ENCODE measurements at regions of chr17 and their contacts with region 1.

Region 1: DNA sequence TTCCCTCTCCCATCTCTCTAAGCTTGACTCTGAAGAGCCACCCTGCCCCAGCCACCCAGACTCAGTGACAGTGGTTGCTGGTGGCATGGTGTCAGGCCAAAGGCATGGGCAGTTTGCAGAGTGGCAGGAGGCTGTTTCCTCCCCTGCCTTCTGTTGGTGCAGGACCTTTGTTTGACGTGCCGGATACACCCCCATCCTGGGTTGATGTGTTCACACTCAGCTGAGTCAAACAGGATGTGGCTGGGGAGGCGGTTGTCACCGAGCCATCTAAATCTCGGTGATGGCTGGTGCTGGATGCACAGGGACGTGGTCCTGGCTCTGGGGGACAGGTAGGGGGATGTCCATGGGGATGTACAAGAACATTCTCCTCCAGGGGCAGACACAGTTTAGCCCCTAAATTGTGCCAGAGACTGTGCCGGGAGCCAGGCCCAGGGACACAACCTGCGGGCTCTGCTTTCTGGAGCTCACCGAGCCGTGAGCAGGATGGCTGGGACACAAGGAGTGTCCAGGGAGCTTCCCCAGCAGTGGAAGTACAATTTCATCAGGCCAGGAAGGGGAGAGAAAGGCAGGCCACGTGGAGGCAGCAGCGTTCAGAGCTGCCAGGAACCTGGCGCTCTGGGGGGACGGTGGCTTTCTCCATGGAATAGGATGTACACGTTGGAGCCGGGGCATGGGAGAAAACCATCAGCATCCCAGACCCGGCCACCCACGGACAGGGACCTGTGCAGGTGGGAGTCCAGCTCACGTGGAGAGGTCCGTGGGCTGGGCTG is 264.2 kb downstream of the SEC14L1 start:
- DNase-seq: peak; percentile 74 to 93 (median 92)
- H3K4me3 ChIP-seq: peak overlapping the region in 5 of 7 experiments; percentile 1 to 55 (median 43)
- H3K27ac ChIP-seq: peak overlapping the region in 1 of 2 experiments; percentile 19
- H3K4me1 ChIP-seq: peaks cover 0 to 100% (median 66%) of the 10 kb centered on the region in 4 experiments
- H3K27me3 ChIP-seq: no peaks in the 10 kb centered on the region

Region 2: DNA sequence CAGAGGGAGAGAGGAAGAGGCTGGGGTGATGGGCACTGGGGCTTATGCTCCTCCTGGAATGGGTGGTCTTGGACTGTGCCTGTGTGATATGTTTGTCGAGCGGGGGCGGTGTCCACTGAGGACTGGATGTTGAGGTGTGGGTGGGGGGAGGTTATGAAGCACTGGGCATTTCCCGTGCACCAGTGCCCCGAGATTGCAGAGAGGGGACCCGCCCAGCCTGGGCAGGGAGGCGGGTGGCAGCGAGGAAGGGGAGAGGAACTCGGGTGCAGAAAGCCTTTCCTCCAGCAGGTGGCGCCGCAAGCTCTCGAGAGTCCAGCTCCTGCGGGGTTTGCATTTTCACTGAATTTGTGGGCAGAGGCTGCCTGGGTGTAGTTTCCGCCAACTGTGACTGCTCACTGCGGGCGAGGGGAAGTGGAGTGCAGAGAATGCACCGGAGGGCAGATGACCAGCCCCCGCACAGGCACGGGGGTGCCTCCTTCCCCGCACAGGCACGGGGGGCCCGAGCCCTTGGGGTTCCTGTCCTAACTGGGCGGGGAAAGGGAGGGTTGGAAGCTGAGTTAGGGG is 73.6 kb before region 1 on chr17:
- CTCF ChIA-PET with region 1: interaction called, 34 read pairs
- POLR2A ChIA-PET with region 1: no interaction called
- DNase-seq: peak; percentile 88 to 95 (median 94)
- H3K4me3 ChIP-seq: peak overlapping the region in 5 of 7 experiments; percentile 27 to 69 (median 54)
- H3K27ac ChIP-seq: no peak overlapping the region
- H3K4me1 ChIP-seq: peaks cover 3 to 57% (median 23%) of the 10 kb centered on the region in 4 experiments
- H3K27me3 ChIP-seq: no peaks in the 10 kb centered on the region

Region 3: DNA sequence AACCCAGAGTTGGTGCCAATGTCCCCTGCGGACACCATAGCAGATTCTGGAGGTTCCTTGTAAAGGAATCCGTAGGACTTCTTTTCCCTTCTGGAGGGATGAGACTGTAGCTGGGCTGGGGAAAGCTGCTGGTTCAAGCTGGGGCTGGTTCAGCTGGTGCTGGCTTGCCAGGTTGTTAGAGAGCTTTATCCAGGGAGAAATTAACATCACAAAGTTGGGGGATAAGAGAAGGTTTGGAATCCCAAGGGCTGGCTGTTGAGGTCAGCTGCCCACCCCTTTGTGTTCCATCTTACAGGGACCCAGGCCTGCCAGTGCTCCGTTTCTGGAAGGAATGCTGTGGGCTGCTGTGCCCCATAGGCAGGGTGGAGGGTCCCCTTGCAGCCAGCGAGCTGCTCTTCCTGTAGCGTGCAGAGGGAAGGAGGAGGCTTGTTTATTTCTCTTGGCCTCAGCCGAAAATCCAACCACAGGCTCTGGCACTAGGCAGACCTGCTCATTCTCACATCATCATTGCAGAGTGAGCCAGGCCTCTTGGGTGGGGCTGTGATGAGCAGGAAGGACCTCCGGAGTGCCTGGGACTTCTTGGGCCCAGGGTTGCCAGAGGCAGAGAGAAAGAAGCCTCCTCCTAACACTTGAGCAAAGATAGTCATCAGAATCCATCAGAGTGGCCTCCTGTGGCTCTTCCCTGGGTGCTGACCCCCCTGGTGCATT is 13.2 kb before region 1 on chr17:
- CTCF ChIA-PET with region 1: interaction called, 311 read pairs
- POLR2A ChIA-PET with region 1: interaction called, 13 read pairs
- DNase-seq: peak in 2 of 3 donors; percentile 61 to 64
- H3K4me3 ChIP-seq: peak overlapping the region in 4 of 7 experiments; percentile 19 to 49 (median 32)
- H3K27ac ChIP-seq: no peak overlapping the region
- H3K4me1 ChIP-seq: peaks cover 7 to 84% (median 77%) of the 10 kb centered on the region in 4 experiments
- H3K27me3 ChIP-seq: no peaks in the 10 kb centered on the region

Region 4: DNA sequence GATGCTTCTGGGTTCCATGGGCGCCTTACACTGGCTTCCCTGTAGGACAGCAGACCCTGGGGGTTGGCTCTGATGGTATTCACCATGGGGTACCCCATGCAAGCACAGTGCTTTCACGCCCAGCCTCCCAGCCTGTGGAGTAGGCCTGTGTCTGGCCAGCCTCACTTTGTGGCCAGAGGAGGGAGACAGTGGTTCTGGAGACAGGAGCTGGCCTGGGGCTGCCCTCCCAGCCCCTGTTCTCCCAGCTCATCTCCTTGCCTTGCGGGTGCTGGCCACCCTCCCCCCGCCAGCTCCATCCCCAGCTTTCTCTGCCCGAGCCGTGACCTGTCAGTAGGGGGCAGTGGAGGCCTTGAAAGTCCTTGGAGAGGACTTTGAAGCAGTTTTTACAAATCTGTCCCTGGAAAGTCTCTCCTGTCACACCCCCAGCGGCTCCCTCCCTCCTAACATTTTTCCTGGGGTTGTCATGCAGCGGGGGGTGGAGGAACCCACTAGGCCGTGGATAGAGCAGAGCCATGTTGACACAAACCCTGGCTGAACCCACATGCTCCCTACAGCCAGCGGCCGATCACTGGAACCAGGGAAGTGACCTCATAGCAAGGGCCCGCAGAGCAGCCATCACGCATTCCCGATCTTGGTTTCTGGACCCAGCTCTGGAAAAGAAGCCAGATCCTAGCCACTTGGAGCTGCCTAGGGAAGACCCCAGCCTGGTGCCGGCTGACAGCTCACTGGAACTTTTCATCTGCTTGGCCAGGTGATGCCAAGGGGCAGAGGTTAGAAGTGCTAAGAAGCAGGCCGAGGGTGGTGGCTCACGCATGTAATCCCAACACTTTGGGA is 25.1 kb after region 1 on chr17:
- CTCF ChIA-PET with region 1: interaction called, 311 read pairs
- POLR2A ChIA-PET with region 1: interaction called, 5 read pairs
- DNase-seq: peak; percentile 65 to 73 (median 68)
- H3K4me3 ChIP-seq: peak overlapping the region in 1 of 7 experiments; percentile 6
- H3K27ac ChIP-seq: no peak overlapping the region
- H3K4me1 ChIP-seq: peaks cover 4 to 99% (median 77%) of the 10 kb centered on the region in 4 experiments
- H3K27me3 ChIP-seq: no peaks in the 10 kb centered on the region

Region 5: GRCh38 chr17:77494664-77495435 is 89.9 kb after region 1 on chr17:
- CTCF ChIA-PET with region 1: interaction called, 48 read pairs
- POLR2A ChIA-PET with region 1: no interaction called
- DNase-seq: peak; percentile 56 to 73 (median 60)
- H3K4me3 ChIP-seq: no peak overlapping the region
- H3K27ac ChIP-seq: no peak overlapping the region
- H3K4me1 ChIP-seq: peaks cover 0 to 10% (median under 1%) of the 10 kb centered on the region in 4 experiments
- H3K27me3 ChIP-seq: no peaks in the 10 kb centered on the region

Region 6: DNA sequence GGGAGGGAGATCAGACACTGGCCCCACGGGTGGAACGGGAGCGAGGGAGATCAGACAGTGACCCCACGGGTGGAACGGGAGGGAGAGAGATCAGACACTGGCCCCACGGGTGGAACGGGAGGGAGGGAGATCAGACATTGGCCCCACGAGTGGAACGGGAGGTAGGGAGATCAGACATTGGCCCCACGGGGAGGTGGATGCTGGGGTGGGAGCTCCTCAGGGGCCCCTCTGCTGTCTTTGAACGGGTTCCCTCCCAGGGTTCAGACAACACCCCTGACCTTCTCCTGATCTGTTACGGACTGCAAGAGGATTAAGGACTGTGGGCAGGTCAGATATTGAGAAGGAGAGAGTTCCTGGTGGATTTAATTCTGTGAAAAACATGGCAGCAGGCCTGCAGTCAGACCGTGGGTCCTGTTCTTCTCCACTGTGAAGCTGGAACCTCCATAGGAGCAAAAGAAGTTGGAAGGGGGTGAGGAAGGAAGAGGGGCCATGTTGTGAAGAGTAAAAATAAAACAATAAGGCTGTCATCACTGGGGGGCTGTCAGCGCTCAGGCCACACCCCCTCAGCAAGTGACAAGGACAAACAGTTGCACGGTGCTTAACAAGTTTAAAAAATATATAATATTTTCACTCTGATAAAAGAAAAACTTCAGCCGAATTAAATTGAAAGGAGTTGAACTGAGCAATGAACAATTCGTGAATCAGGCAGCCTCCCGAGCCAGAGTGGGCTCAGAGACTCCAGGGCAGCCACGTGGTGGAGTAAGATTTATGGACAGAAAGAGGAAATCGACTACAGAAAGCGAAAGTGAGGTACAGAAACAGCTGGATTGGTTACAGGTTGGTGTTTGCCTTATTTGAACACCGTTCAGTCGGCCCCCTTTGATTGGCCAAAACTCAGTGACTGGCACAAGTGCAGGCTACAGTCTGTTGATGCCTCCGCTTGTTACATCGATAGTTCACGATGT is 204.8 kb after region 1 on chr17:
- CTCF ChIA-PET with region 1: no interaction called
- POLR2A ChIA-PET with region 1: no interaction called
- DNase-seq: peak; percentile 86 to 97 (median 94)
- H3K4me3 ChIP-seq: peak overlapping the region in 6 of 7 experiments; percentile 20 to 67 (median 44)
- H3K27ac ChIP-seq: peak overlapping the region; percentile 18 to 25
- H3K4me1 ChIP-seq: peaks cover 4 to 26% (median 22%) of the 10 kb centered on the region in 4 experiments
- H3K27me3 ChIP-seq: no peaks in the 10 kb centered on the region

Region 7: GRCh38 chr17:77821097-77821496 is 416.1 kb after region 1 on chr17:
- CTCF ChIA-PET with region 1: no interaction called
- POLR2A ChIA-PET with region 1: no interaction called
- DNase-seq: peak in 1 of 3 donors; percentile 34
- H3K4me3 ChIP-seq: no peak overlapping the region
- H3K27ac ChIP-seq: no peak overlapping the region
- H3K4me1 ChIP-seq: no peaks in the 10 kb centered on the region
- H3K27me3 ChIP-seq: peaks cover 0 to 3% (median 0%) of the 10 kb centered on the region in 5 experiments

Measured in common myeloid progenitor, CD34-positive (primary cell).